Heart right ventricle (tissue), 16 donors: ENCODE measurements at regions of chr1 and their contacts with region 1.

Region 1: DNA sequence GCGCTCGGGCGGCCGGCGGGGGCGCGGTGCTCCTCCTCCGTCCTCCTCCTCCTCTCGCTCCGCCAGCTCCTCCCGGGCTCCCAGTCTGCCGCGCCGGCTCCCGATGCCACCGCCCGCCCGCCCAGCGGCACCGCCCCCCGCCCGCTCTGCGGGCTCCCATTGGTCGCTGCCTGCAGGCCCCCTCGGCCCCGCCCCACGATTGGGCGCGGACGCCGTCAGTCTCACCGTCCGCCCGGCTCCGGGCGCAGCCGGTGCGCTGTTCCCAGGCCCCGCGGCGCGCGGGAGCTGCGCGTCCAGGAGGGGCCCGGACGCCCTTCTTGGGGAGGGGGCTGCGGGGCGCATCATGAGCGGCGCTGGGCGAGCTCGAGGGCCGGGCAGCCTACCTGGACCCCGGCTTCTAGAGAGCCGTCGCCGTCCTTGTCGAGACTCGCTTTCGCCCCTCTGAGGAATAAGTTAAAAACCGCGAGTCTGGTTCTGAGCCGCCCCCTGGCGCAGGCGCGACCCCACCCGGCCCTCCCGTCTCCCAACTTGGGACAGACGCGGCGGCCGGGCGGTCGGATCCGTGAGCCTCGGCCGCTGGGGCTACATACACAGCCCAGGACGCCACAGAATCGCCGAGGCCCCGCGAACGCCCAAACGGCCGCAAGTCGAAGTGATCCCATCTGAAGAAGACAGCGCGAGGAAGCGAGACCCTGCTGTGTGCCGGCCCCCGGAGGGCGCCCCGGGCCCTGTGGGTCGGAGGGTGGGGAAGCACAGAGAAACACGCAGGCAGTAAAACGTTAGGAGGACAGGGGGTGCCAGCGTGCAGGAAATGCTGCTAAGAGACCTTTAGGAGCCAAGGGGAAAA is at the start of gene SIPA1L2:
- DNase-seq: peak; percentile 94 to 97
- ATAC-seq: peak; percentile 95 to 98 (median 96)
- H3K4me3 ChIP-seq: peak within 1 kb of the TSS; percentile 57 to 98 (median 86)
- H3K27ac ChIP-seq: peak within 1 kb of the TSS; percentile 63 to 96 (median 94)
- H3K4me1 ChIP-seq: peaks cover 4 to 52% (median 33%) of the 10 kb centered on the region in 9 donors
- H3K27me3 ChIP-seq: no peaks in the 10 kb centered on the region
- CTCF ChIP-seq: peak in 8 of 9 donors; percentile 17 to 71 (median 54)
- total RNA-seq, gene SIPA1L2: 64.9 to 141 (median 101) TPM

Region 2: GRCh38 chr1:232306269-232306961 is 323.9 kb before region 1 on chr1:
- intact Hi-C with region 1: loop called in 2 of 10 experiments (anchors 5 to 10 kb)
- DNase-seq: peak; percentile 45 to 63
- ATAC-seq: peak; percentile 78 to 94 (median 90)
- H3K4me3 ChIP-seq: no peak overlapping the region
- H3K27ac ChIP-seq: peak overlapping the region in 8 of 10 donors; percentile 9 to 73 (median 56)
- H3K4me1 ChIP-seq: peaks cover 0 to 27% (median 19%) of the 10 kb centered on the region in 9 donors
- H3K27me3 ChIP-seq: no peaks in the 10 kb centered on the region
- CTCF ChIP-seq: peak; percentile 10 to 67 (median 46)

Region 3: GRCh38 chr1:232435729-232436128 is 194.5 kb before region 1 on chr1:
- intact Hi-C with region 1: loop called in 3 of 10 experiments (anchors 5 to 10 kb)
- DNase-seq: peak; percentile 37 to 40
- ATAC-seq: peak in 6 of 8 donors; percentile 29 to 57 (median 46)
- H3K4me3 ChIP-seq: no peak overlapping the region
- H3K27ac ChIP-seq: peak overlapping the region in 5 of 10 donors; percentile 3 to 43 (median 18)
- H3K4me1 ChIP-seq: peaks cover 0 to 64% (median 37%) of the 10 kb centered on the region in 9 donors
- H3K27me3 ChIP-seq: no peaks in the 10 kb centered on the region
- CTCF ChIP-seq: no peak

Region 4: DNA sequence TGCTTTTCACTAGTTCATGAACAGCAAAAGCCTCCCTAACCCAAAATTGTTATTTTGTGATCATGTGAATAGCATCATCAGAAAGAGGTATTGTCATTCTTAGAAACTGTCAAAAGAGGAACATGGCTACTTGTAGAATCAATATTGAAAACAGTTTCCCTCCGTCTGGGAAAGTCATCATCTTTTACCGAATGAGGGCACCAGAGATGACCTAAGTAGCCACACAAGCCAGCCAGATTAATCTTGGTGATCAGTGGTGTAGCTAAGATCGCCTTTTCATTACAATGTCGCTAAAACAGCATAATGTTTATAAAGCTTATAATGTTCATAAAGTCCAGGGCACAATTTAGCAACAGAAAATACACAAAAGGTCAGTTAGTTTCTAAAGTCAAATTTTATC is 136.4 kb before region 1 on chr1:
- intact Hi-C with region 1: loop called in 5 of 10 experiments (anchors 10 kb)
- DNase-seq: no peak
- ATAC-seq: no peak
- H3K4me3 ChIP-seq: no peak overlapping the region
- H3K27ac ChIP-seq: no peak overlapping the region
- H3K4me1 ChIP-seq: peaks cover 0 to 42% (median 18%) of the 10 kb centered on the region in 9 donors
- H3K27me3 ChIP-seq: no peaks in the 10 kb centered on the region
- CTCF ChIP-seq: no peak

Region 5: DNA sequence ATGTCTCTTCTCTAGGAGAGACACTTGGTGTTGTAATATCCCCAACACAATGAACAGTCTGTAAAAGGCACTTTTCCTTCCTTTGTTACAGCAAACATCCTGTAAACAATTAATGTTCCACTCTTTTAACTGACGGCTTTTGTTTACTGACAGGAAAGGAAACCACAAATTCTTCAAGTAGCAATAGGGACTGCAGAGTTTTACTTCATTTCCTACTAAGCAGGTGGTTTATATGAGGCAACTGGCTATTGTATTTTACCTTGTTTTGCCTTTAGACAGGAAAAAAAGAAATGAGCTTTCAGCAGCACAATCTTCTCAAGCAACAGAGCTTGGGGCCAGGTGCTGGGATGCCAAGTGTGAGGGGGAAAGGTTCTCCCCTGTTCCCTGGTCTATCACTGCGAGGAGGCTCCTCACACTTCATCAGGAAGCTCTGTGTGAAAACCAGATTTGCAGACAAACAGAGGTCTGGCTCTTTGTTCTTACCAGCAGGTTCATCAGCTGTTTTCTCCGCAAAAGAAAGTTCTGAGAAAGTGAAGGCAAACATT is 51.5 kb before region 1 on chr1:
- intact Hi-C with region 1: loop called in 3 of 10 experiments (anchors 2 to 10 kb)
- DNase-seq: no peak
- ATAC-seq: peak; percentile 21 to 76 (median 58)
- H3K4me3 ChIP-seq: no peak overlapping the region
- H3K27ac ChIP-seq: peak overlapping the region in 9 of 10 donors; percentile 42 to 82 (median 63)
- H3K4me1 ChIP-seq: peaks cover 0 to 86% (median 56%) of the 10 kb centered on the region in 9 donors
- H3K27me3 ChIP-seq: no peaks in the 10 kb centered on the region
- CTCF ChIP-seq: no peak

Region 6: GRCh38 chr1:232813760-232814159 is 183.5 kb after region 1 on chr1:
- intact Hi-C with region 1: loop called in 5 of 10 experiments (anchors 5 to 10 kb)
- DNase-seq: no peak
- ATAC-seq: no peak
- H3K4me3 ChIP-seq: no peak overlapping the region
- H3K27ac ChIP-seq: no peak overlapping the region
- H3K4me1 ChIP-seq: peaks cover 0 to 29% (median 17%) of the 10 kb centered on the region in 9 donors
- H3K27me3 ChIP-seq: no peaks in the 10 kb centered on the region
- CTCF ChIP-seq: no peak